ENCODE measurements at regions of chr10 and their contacts with region 1.

Region 1: DNA sequence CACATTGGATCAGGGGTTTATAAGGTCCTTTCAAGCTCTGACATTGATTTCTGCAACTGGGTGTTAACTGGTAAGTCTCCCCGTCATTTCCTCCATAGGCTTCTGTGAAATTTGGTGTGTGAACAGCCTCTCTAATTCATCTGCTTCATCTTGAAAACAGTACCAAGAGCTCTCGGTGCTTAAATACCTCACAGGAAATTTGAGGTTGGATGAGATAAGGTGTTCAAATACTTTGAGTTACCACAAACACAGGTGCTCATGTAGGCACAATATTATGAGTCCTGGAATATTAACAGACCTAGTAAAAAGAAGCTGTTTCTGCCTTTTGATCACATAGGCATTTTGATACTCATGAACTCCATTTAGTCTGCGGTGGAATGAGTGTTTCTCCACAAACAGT is 85.2 kb downstream of the RTKN2 start:
- DNase-seq: peak; percentile 68
- H3K4me3 Mint-ChIP-seq: no peak overlapping the region
- H3K27ac Mint-ChIP-seq: peak overlapping the region; percentile 99
- H3K4me1 Mint-ChIP-seq: peaks cover 88% of the 10 kb centered on the region
- H3K27me3 Mint-ChIP-seq: no peaks in the 10 kb centered on the region

Region 2: DNA sequence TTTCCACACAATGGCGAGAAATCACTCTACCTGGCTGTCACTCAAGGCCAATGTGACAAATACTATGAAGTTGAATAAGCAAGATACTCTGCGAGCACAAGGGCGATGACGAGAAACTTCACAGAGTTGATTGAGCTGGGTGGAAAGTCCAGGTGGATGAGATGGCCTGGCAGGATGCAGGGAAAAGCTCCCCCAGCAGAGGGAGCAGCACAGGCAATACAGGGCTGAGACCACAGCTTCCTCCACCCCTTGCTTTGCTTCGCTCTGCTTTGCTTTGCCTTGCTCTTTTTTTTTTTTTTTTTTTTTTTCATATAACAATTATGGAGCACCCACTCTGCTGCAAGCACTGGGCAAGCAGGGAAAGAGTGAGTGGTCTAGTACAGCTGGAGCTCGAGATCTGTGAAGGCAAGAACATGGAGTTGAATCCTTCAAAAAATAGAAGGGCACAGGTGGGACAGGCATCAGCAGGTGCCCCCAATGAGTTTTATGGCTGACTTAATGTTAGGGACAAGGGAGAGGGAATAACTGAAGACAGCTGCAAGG is 432.4 kb before region 1 on chr10:
- CTCF ChIA-PET with region 1: no interaction called
- intact Hi-C with region 1: loop called (anchors 5 kb)
- DNase-seq: peak; percentile 85
- H3K4me3 Mint-ChIP-seq: no peak overlapping the region
- H3K27ac Mint-ChIP-seq: peak overlapping the region; percentile 14
- H3K4me1 Mint-ChIP-seq: peaks cover 38% of the 10 kb centered on the region
- H3K27me3 Mint-ChIP-seq: no peaks in the 10 kb centered on the region

Region 3: DNA sequence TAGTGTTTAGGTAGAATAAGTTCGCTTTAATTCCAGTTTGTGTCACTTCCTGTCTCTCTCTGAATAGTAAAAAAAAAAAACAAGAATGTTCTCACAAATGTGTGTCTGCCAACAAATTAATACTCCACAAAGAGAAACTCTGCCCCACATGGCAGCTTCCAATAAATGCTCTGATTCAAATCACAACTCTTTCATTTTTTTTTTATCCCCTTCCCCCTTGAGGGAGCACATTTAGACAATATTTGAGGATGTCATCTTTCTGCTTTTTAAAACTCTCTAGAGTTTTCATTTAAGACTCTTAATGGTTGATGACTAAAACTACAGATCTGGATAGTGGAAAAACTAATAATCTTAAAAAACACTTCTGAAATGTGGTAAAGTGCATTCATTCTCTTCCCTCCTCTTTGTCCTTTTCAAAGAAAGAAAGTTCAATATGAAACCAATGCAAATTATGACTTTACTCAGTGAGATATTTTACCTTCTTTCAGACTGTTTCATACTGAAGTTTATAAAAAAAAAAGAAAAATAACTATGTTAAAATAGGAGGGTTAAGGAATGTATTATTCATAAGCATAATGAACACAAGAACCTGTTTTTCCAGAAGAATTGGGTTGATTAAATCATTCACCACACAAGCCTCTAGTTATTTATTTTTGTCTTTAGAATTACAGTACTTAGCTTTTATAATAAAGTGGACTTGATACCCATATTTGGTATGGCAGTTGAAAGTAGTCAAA is 239.6 kb before region 1 on chr10:
- CTCF ChIA-PET with region 1: no interaction called
- intact Hi-C with region 1: loop called (anchors 1 kb)
- DNase-seq: peak; percentile 47
- H3K4me3 Mint-ChIP-seq: peak overlapping the region; percentile 62
- H3K27ac Mint-ChIP-seq: peak overlapping the region; percentile 98
- H3K4me1 Mint-ChIP-seq: peaks cover 71% of the 10 kb centered on the region
- H3K27me3 Mint-ChIP-seq: no peaks in the 10 kb centered on the region

Region 4: DNA sequence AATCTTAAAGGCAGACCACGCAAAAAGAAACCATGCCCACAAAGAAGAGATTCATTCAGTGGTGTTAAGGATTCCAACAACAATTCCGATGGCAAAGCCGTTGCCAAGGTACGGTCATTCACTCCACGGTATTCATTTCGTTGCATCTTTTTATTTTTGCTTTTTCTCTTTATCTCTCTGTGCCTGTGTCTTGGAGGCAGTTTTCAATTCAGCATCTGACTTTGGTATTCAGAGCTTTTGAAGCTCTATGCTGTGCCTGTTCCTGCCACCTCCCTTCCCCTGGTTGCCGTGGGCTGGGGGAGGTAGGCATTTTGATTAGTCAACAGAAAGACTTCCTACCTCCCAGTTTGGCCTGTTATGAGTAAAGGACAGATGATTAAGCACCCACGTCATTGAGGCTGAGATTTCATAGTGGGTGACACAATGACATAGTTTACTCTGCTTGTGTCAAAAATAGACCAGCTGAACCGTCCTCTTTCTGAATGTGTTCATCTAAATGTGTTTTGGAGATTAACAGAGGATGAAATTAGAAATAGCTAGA is 132.5 kb before region 1 on chr10:
- CTCF ChIA-PET with region 1: interaction called, 13 read pairs
- intact Hi-C with region 1: loop called (anchors 1 kb)
- DNase-seq: peak; percentile 91
- H3K4me3 Mint-ChIP-seq: peak overlapping the region; percentile 94
- H3K27ac Mint-ChIP-seq: peak overlapping the region; percentile 100
- H3K4me1 Mint-ChIP-seq: peaks cover 87% of the 10 kb centered on the region
- H3K27me3 Mint-ChIP-seq: no peaks in the 10 kb centered on the region

Region 5: DNA sequence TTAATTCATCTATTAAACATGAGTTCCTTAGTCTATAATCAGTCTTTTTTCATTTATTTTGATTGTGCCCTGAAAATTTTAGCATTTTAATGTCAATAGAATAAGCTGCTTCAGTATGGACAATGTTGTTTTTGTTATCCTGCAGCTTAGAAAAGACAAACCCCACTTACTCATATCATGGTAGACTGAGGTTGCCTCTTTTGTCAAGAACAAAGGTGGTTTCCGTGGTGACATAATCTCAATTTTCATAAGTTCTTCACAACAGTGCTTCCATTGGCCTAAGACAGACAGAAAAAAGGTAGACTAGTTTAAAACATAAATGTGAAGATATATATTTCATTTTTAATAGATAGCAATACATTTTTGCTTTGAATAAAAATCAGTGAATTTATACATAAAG is 16.1 kb after region 1 on chr10:
- CTCF ChIA-PET with region 1: interaction called, 4 read pairs
- intact Hi-C with region 1: loop called (anchors 1 kb)
- DNase-seq: no peak
- H3K4me3 Mint-ChIP-seq: no peak overlapping the region
- H3K27ac Mint-ChIP-seq: peak overlapping the region; percentile 5
- H3K4me1 Mint-ChIP-seq: peaks cover 31% of the 10 kb centered on the region
- H3K27me3 Mint-ChIP-seq: no peaks in the 10 kb centered on the region

Region 6: DNA sequence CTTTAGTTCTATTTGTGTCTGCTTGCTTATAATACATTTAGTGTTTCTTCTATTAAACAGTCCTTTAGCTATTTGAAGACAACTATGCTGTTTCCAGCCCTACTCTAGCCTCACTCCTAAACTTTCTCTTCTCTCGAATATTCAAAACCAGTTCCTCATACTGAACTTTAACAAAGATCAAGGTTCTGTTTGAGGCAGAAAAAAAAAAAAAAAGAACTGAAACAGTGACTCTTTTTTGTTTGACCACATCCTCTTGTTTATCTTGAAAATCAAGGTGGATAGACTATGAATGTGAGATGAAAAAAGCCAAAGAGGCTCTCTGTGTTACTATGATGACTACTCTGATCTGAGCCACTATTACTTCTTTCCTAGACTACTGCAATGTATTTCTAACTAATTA is 345.0 kb after region 1 on chr10:
- CTCF ChIA-PET with region 1: no interaction called
- intact Hi-C with region 1: loop called (anchors 5 kb)
- DNase-seq: no peak
- H3K4me3 Mint-ChIP-seq: peak overlapping the region; percentile 19
- H3K27ac Mint-ChIP-seq: peak overlapping the region; percentile 26
- H3K4me1 Mint-ChIP-seq: peaks cover 37% of the 10 kb centered on the region
- H3K27me3 Mint-ChIP-seq: no peaks in the 10 kb centered on the region

Region 7: GRCh38 chr10:63227207-63227915 is 1043.9 kb after region 1 on chr10:
- CTCF ChIA-PET with region 1: no interaction called
- intact Hi-C with region 1: loop called (anchors 10 kb)
- DNase-seq: no peak
- H3K4me3 Mint-ChIP-seq: no peak overlapping the region
- H3K27ac Mint-ChIP-seq: peak overlapping the region; percentile 97
- H3K4me1 Mint-ChIP-seq: peaks cover 56% of the 10 kb centered on the region
- H3K27me3 Mint-ChIP-seq: no peaks in the 10 kb centered on the region